ENCODE measurements at regions of chrX and their contacts with region 1.

Region 1: DNA sequence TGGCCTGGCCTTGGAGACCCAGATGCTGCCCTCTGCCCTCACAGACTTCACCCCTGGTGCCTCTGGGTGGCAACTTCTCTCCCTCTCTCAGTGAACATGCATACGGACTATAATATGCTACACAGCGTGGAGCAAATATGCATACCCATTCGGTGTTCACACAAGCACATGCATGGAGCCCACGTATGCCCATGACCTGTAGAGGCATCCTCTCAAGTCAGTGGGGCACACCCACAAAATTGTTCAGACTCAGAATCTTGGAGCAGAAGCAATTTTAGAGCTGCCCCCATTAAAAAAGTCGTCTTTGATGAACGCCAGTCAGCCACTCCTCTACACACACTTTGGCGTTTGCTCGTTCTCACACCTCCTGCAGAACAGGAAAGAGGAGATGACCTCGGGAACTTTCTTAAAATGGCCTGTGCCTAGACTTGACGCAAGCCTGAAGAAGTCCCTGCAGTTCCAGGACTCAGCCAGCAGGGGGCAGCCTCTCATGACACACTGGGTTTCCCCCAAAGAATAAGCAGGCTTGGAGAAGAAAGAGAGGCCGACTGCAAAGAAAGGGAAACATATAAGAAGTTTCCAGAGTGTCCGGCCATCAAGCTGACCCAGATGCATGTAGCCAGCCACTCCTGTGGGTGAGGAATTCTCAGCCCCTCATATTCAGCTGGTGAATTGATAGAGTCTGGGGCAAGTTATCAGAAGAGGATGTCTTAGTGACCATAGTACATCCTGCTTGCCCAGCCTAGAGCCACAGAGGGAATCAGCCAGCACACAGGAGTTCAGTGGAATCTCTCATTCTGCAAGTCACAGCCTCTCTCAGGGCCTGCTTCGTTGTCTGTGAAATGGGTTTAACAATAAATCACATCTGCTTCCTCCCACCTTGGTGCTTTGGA is 17.3 kb downstream of the APLN start:
- DNase-seq: peak; percentile 53
- ATAC-seq: peak; percentile 91
- H3K4me3 ChIP-seq: no peak overlapping the region
- H3K27ac ChIP-seq: no peak overlapping the region
- H3K4me1 ChIP-seq: no peaks in the 10 kb centered on the region
- H3K27me3 ChIP-seq: peaks cover 15% of the 10 kb centered on the region; the same call in 1 of the 2 replicates
- CTCF ChIP-seq: peak; percentile 84
- POLR2A ChIP-seq: no peak
- RAD21 ChIP-seq: peak; percentile 82

Region 2: DNA sequence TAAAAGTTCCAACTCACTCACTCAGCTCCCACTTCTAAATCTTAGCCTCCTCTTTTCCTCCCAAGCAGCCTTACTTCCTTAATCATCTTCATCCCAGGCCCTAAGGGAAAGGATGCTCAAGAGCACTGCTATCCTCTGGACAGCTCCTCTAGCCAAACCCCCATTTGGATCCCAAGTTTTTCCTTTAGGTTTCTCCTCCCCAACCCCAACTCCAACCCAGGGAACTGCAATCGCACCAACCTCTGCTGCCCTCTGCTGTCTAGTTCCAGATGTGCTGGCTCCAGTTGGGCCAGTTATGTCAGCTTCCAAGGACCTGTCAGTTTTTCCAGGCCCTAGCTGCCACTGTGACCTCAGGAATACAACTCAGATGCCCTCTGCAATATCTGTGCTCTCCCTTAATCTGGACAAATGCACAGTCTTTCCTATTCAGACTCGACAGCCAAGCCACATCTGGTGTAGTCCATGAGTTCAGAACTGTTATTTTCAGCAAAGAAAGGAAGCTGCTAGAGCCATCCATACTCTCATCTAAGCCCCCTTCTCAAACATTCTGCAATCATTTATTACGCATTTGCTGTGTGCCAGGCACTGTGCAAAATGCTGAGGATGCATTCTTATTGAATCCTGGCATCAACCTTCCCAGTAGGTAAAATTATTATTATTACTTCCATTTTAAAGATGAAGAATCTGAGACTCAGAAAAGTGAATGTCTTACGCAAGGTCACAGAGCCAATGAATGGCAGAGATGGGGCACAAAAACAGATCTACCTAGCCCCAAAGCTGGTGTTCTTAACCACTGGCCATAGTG is 89.0 kb after region 1 on chrX:
- CTCF ChIA-PET with region 1: interaction called, 32 read pairs
- POLR2A ChIA-PET with region 1: no interaction called
- dilution Hi-C with region 1: no loop called
- in situ Hi-C with region 1: loop called (anchors 5 kb)
- intact Hi-C with region 1: loop called (anchors 1 kb)
- DNase-seq: peak; percentile 69
- ATAC-seq: peak; percentile 93
- H3K4me3 ChIP-seq: no peak overlapping the region
- H3K27ac ChIP-seq: no peak overlapping the region
- H3K4me1 ChIP-seq: no peaks in the 10 kb centered on the region
- H3K27me3 ChIP-seq: peaks cover 20% of the 10 kb centered on the region
- CTCF ChIP-seq: peak; percentile 74
- POLR2A ChIP-seq: no peak
- RAD21 ChIP-seq: peak; percentile 91

Region 3: DNA sequence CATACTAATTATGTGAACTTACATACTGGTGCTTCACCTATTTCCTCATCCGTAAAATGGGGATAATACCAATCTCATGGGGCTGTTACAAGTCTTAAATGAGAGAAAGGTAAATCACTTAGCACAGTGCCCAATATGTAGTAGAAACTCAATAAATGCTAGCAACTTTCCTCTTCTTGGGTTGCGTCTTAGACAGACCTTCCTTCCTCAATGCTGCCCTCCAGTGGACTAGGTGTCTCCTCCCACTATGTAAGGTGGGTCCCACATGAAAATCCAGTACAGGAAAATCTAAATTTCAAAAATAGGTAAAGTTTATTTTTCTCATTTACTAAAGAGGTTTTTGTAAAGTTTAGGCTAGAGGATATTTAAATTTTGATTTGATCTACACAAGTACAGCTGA is 185.7 kb after region 1 on chrX:
- CTCF ChIA-PET with region 1: no interaction called
- POLR2A ChIA-PET with region 1: no interaction called
- dilution Hi-C with region 1: no loop called
- in situ Hi-C with region 1: no loop called
- intact Hi-C with region 1: loop called (anchors 10 kb)
- DNase-seq: peak; percentile 15
- ATAC-seq: no peak
- H3K4me3 ChIP-seq: no peak overlapping the region
- H3K27ac ChIP-seq: no peak overlapping the region
- H3K4me1 ChIP-seq: peaks cover 2% of the 10 kb centered on the region; the same call in 1 of the 2 replicates
- H3K27me3 ChIP-seq: no peaks in the 10 kb centered on the region; the same call in 1 of the 2 replicates
- CTCF ChIP-seq: peak; percentile 38
- POLR2A ChIP-seq: no peak
- RAD21 ChIP-seq: peak; percentile 41

Region 4: GRCh38 chrX:131544218-131544617 is 1906.8 kb after region 1 on chrX:
- CTCF ChIA-PET with region 1: no interaction called
- POLR2A ChIA-PET with region 1: no interaction called
- dilution Hi-C with region 1: no loop called
- in situ Hi-C with region 1: no loop called
- intact Hi-C with region 1: no loop called
- DNase-seq: no peak
- ATAC-seq: no peak
- H3K4me3 ChIP-seq: no peak overlapping the region
- H3K27ac ChIP-seq: no peak overlapping the region
- H3K4me1 ChIP-seq: no peaks in the 10 kb centered on the region
- H3K27me3 ChIP-seq: peaks cover 1% of the 10 kb centered on the region; the same call in 1 of the 2 replicates
- CTCF ChIP-seq: no peak
- POLR2A ChIP-seq: no peak
- RAD21 ChIP-seq: no peak